Prostate gland (tissue), 2 donors: ENCODE measurements at regions of chr16 and their contacts with region 1.

Region 1: DNA sequence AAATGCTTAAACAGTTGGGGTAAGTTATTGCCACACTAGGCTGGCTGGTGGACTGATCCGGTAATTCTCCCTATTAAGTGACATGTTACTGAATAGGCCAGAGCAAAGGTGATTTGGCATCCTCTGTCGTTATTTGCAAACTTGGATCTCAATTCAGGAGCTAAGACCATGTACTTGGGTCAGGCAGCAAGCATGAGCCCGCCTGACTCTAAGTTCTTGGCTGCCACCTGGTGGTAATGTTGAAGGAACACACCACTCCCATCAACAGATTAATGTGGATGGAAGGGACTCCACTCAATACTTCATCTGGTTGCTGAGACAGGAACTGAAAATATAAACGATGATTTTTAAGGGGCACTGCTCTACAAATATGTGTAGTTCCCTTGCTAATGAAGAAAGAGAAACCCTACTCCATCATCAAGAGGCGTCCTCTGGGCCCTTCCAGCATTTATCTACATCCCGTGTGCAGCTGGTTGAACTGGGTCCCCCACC is 70.8 kb downstream of the EMP2 start:
- DNase-seq: peak; percentile 51
- H3K4me3 ChIP-seq: no peak overlapping the region
- H3K27ac ChIP-seq: no peak overlapping the region
- H3K4me1 ChIP-seq: peaks cover 2% of the 10 kb centered on the region
- H3K27me3 ChIP-seq: no peaks in the 10 kb centered on the region
- CTCF ChIP-seq: peak; percentile 56 to 83 (median 67)
- POLR2A ChIP-seq: no peak

Region 2: DNA sequence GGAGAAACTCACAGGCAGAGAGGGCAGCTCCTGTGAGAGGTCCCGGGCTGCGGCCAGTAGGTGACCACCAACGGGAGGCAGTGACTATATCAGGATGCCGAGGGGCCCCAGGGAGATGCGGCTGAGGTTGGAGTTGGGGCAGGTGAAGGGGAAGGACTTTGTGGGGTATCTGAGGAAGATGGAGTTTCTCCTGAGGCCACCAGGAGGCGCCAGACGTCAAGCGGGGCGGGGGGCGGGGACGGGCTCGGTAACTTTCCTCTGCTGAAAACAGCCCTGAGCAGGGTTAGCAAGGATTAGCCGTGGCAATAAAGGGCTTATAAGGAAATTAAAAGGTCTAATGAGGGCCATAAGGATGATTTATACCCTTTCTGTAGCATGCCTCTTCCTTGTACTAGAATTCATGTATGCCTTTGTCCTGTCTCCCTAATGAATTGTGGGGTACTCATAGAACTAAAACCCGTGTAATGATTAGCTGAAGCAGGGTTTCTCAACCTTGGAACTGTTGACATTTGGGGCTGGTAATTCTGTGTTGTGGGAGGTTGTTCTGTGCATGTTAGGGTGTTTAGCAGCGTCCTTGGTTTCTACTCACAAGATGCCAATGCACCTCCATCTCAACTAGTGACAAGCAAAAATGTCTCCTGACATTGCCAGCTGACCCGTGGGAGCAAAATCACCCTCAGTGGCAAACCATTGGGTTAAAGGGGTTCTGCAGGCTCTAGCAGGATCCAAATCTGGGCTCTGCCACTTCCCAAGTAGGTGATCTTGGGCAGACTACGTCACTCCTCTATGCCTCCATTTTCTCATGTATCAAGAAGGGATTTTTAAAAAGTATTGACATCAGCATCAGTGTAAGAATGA is 252.6 kb before region 1 on chr16:
- intact Hi-C with region 1: loop called (anchors 2 kb)
- DNase-seq: no peak
- H3K4me3 ChIP-seq: no peak overlapping the region
- H3K27ac ChIP-seq: no peak overlapping the region
- H3K4me1 ChIP-seq: no peaks in the 10 kb centered on the region
- H3K27me3 ChIP-seq: no peaks in the 10 kb centered on the region
- CTCF ChIP-seq: peak; percentile 50 to 67 (median 51)
- POLR2A ChIP-seq: no peak

Region 3: GRCh38 chr16:11224096-11224893 is 714.7 kb after region 1 on chr16:
- intact Hi-C with region 1: no loop called
- DNase-seq: peak; percentile 33
- H3K4me3 ChIP-seq: no peak overlapping the region
- H3K27ac ChIP-seq: peak overlapping the region; percentile 18 to 22
- H3K4me1 ChIP-seq: no peaks in the 10 kb centered on the region
- H3K27me3 ChIP-seq: no peaks in the 10 kb centered on the region
- CTCF ChIP-seq: no peak
- POLR2A ChIP-seq: no peak